Aorta (tissue), 5 donors: ENCODE measurements at regions of chr3 and their contacts with region 1.

Region 1: DNA sequence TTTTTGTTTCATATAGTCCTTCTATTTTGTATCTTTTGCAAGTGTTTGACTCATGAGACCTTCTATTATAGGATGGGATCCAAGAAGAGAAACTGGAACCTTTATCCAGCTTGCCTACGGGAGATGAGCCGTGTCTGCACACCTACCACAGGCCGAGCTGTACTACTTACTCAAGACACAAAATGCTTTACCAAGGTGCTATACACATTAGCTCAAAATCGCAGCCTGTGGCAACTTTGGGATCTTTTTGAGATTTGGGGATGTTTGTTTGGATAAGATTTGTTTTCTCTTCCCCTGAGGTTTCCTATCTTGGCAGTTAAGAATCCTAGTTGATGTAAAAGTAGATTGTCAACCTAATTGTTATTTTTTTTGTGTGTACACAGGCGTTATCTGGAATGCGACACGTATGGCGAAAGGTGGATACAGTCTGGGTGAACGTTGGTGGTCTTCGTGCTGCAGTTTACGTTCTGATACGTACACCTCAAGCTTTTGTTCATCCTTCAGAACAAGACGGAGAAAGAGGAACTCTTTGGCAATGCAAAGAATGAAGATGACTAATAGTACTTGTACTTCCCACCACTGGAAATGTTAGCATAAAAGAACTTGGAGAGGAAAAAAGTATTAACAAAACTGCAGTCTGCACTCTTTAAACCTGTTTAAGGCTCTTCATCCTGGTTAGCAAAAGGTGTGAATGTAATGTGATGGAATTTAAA is 13.1 kb upstream of the SETD5 start:
- DNase-seq: no peak
- ATAC-seq: no peak
- H3K4me3 ChIP-seq: no peak overlapping the region
- H3K27ac ChIP-seq: no peak overlapping the region
- H3K4me1 ChIP-seq: no peaks in the 10 kb centered on the region
- H3K27me3 ChIP-seq: no peaks in the 10 kb centered on the region

Region 2: GRCh38 chr3:9342710-9343109 is 41.6 kb before region 1 on chr3:
- intact Hi-C with region 1: no loop called
- DNase-seq: no peak
- ATAC-seq: no peak
- H3K4me3 ChIP-seq: no peak overlapping the region
- H3K27ac ChIP-seq: no peak overlapping the region
- H3K4me1 ChIP-seq: no peaks in the 10 kb centered on the region
- H3K27me3 ChIP-seq: no peaks in the 10 kb centered on the region

Region 3: DNA sequence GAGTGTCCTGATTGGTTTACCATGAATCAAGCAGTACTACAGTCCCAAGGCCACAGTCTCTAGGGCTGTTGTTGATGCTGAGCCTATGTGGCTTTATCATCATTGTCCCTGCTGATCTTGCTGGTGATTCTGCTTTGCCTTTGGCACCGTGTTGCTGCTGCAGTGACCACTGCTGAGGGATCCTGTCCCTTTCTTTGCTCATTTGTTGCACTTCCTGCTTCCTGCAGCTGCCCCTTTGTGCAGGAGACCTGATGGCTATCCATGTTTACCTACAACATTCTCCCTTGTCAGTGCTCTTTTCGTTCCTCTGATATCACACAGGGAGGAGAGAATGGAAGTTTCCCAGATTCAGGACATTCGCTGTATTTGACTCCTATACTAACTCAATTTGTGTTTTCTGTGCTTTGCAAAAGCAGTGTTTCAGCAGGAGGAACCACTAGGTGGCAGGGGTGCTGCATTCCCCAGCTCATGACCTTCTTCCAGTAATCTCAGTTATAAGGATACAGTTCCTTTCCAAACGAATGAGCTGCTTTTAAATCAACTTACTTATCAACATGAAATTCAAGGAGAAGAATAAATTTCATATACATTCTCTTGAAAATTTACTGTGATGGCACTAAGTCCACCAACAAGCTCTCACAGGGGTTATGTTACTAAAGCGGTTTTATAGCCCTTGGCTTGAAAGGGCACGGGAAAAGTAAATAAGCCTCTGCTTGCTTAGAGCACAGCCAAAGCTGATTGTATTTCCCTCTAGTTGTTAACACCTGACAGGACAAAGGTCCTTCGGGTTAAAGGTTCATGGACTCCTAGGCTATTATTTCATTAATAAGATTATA is 31.2 kb before region 1 on chr3:
- intact Hi-C with region 1: loop called in 1 of 2 experiments (anchors 1 kb)
- DNase-seq: peak; percentile 71 to 82
- ATAC-seq: peak; percentile 89
- H3K4me3 ChIP-seq: no peak overlapping the region
- H3K27ac ChIP-seq: no peak overlapping the region
- H3K4me1 ChIP-seq: peaks cover 0 to 1% of the 10 kb centered on the region in 2 donors
- H3K27me3 ChIP-seq: no peaks in the 10 kb centered on the region

Region 4: DNA sequence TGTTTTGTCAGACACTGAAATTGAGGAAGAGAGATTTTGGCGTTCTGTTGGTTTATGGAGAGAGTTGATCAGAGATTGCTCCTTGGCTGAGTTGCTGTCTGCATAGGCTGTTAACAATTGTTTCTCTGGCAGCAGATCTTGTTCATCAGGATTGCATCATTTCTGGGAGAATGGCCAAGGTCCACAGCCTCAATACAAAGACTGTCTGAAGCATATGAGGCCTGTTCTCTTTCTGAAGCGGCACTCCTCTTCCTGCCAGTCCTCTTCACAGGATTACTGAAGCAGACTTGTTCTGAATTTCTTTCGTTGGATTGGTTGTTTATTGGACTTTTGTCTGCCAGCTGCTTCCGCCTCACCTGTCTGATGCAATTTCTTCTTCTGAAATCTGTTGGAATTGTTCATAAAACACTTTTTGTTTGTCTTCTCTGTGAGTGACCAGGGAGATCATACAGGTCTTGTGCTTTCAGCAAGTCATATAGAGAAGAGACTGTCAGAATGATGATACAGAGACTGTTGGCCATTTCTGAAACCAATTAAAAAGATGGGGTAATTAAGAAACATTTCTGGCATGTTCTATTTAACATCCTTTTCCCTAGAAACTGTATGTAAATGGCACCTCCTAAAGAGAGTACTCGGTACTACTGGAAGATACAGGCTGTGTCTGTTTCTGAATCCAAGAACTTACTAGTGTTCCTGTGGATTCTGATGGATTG is 38.6 kb after region 1 on chr3:
- intact Hi-C with region 1: loop called in 1 of 2 experiments (anchors 5 kb)
- DNase-seq: peak in 1 of 2 donors; percentile 74
- ATAC-seq: peak; percentile 93
- H3K4me3 ChIP-seq: no peak overlapping the region
- H3K27ac ChIP-seq: peak overlapping the region; percentile 19 to 86
- H3K4me1 ChIP-seq: peaks cover 1 to 3% of the 10 kb centered on the region in 2 donors
- H3K27me3 ChIP-seq: no peaks in the 10 kb centered on the region

Region 5: GRCh38 chr3:9430733-9431132 is 46.4 kb after region 1 on chr3:
- intact Hi-C with region 1: loop called in 1 of 2 experiments (anchors 5 kb)
- DNase-seq: no peak
- ATAC-seq: no peak
- H3K4me3 ChIP-seq: no peak overlapping the region
- H3K27ac ChIP-seq: no peak overlapping the region
- H3K4me1 ChIP-seq: no peaks in the 10 kb centered on the region
- H3K27me3 ChIP-seq: no peaks in the 10 kb centered on the region

Region 6: DNA sequence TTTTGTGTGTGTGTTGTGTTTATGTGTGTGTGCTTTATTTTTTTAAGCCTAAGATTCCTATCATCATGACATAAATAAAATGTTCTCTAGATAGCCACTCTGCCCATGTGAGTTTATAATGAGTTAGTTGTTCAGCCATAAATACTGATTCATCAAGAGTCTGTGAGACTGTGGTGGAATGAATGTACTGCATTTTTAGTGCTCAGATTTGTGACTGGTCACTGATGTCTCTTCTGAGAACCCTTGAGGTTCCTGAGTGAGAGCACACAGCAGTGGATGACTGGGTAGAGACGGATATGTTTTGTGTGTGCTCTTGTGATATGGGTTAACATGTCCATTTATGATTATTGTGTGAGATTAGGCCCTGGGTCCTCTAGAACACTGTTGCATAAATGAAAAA is 64.3 kb after region 1 on chr3:
- intact Hi-C with region 1: loop called in 1 of 2 experiments (anchors 10 kb)
- DNase-seq: no peak
- ATAC-seq: no peak
- H3K4me3 ChIP-seq: no peak overlapping the region
- H3K27ac ChIP-seq: no peak overlapping the region
- H3K4me1 ChIP-seq: no peaks in the 10 kb centered on the region
- H3K27me3 ChIP-seq: no peaks in the 10 kb centered on the region

Region 7: GRCh38 chr3:9468460-9468859 is 84.2 kb after region 1 on chr3:
- intact Hi-C with region 1: no loop called
- DNase-seq: no peak
- ATAC-seq: no peak
- H3K4me3 ChIP-seq: no peak overlapping the region
- H3K27ac ChIP-seq: no peak overlapping the region
- H3K4me1 ChIP-seq: no peaks in the 10 kb centered on the region
- H3K27me3 ChIP-seq: no peaks in the 10 kb centered on the region